Panc1 (cell line): ENCODE measurements at regions of chr19 and their contacts with region 1.

Region 1: DNA sequence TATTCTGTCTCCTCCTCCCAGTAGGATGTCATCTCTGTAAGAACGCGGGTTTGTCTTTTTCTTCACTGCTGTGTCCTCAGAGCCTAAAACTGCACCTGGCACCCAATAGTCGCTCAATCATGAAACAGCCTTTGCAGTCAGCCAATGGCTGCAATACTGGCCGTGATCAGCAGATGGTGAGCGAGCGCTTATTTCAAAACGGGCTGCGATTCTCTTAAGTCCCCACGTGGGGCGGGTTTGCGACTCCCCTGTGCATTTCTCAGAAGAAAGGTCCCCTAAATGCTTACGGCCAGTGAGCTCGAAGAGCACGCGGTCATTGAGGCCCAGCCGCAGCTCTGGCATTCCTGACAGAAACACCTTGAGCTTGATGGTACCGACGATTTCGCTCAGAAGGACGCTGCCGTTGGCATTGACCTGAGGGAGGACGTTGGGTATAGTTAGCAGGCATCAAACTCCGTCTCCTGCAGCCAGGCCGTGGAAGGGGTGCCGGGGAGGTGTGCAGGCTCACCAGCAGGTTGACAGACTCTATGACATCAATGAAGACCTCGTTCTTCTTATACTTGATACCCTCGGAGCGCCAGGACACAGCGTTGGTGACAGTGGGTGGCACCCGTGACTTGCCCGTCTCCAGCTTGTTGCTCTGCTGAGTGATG is 6.0 kb downstream of the AP1M2 start:
- DNase-seq: peak; percentile 76
- ATAC-seq: peak; percentile 91
- H3K4me3 ChIP-seq: peak overlapping the region in 1 of 2 experiments; percentile 37; a peak in 2 of 4 replicates
- H3K27ac ChIP-seq: no peak overlapping the region
- H3K4me1 ChIP-seq: no peaks in the 10 kb centered on the region
- H3K27me3 ChIP-seq: no peaks in the 10 kb centered on the region
- CTCF ChIP-seq: peak; percentile 94

Region 2: GRCh38 chr19:10431943-10432735 is 149.0 kb before region 1 on chr19:
- CTCF ChIA-PET with region 1: no interaction called
- POLR2A ChIA-PET with region 1: interaction called, 13 read pairs
- in situ Hi-C with region 1: no loop called
- intact Hi-C with region 1: no loop called
- DNase-seq: no peak
- ATAC-seq: peak; percentile 74
- H3K4me3 ChIP-seq: peak overlapping the region; percentile 49 to 65
- H3K27ac ChIP-seq: peak overlapping the region; percentile 75
- H3K4me1 ChIP-seq: peaks cover 17% of the 10 kb centered on the region
- H3K27me3 ChIP-seq: no peaks in the 10 kb centered on the region
- CTCF ChIP-seq: no peak

Region 3: GRCh38 chr19:10602330-10603083 is 21.4 kb after region 1 on chr19:
- CTCF ChIA-PET with region 1: interaction called, 3 read pairs
- POLR2A ChIA-PET with region 1: interaction called, 11 read pairs
- in situ Hi-C with region 1: no loop called
- intact Hi-C with region 1: no loop called
- DNase-seq: no peak
- ATAC-seq: peak; percentile 98
- H3K4me3 ChIP-seq: peak overlapping the region; percentile 63 to 71
- H3K27ac ChIP-seq: peak overlapping the region; percentile 68
- H3K4me1 ChIP-seq: peaks cover 16% of the 10 kb centered on the region
- H3K27me3 ChIP-seq: no peaks in the 10 kb centered on the region
- CTCF ChIP-seq: no peak

Region 4: GRCh38 chr19:10620786-10621185 is 39.7 kb after region 1 on chr19:
- CTCF ChIA-PET with region 1: interaction called, 11 read pairs
- POLR2A ChIA-PET with region 1: no interaction called
- in situ Hi-C with region 1: no loop called
- intact Hi-C with region 1: no loop called
- DNase-seq: no peak
- ATAC-seq: no peak
- H3K4me3 ChIP-seq: no peak overlapping the region
- H3K27ac ChIP-seq: no peak overlapping the region
- H3K4me1 ChIP-seq: peaks cover 6% of the 10 kb centered on the region
- H3K27me3 ChIP-seq: no peaks in the 10 kb centered on the region
- CTCF ChIP-seq: no peak

Region 5: GRCh38 chr19:10644260-10645007 is 63.3 kb after region 1 on chr19:
- CTCF ChIA-PET with region 1: interaction called, 49 read pairs
- POLR2A ChIA-PET with region 1: no interaction called
- in situ Hi-C with region 1: no loop called
- intact Hi-C with region 1: loop called (anchors 1 kb)
- DNase-seq: peak; percentile 27
- ATAC-seq: peak; percentile 97
- H3K4me3 ChIP-seq: no peak overlapping the region
- H3K27ac ChIP-seq: no peak overlapping the region
- H3K4me1 ChIP-seq: peaks cover 5% of the 10 kb centered on the region; the same call in 1 of the 2 replicates
- H3K27me3 ChIP-seq: no peaks in the 10 kb centered on the region
- CTCF ChIP-seq: peak; percentile 91

Region 6: DNA sequence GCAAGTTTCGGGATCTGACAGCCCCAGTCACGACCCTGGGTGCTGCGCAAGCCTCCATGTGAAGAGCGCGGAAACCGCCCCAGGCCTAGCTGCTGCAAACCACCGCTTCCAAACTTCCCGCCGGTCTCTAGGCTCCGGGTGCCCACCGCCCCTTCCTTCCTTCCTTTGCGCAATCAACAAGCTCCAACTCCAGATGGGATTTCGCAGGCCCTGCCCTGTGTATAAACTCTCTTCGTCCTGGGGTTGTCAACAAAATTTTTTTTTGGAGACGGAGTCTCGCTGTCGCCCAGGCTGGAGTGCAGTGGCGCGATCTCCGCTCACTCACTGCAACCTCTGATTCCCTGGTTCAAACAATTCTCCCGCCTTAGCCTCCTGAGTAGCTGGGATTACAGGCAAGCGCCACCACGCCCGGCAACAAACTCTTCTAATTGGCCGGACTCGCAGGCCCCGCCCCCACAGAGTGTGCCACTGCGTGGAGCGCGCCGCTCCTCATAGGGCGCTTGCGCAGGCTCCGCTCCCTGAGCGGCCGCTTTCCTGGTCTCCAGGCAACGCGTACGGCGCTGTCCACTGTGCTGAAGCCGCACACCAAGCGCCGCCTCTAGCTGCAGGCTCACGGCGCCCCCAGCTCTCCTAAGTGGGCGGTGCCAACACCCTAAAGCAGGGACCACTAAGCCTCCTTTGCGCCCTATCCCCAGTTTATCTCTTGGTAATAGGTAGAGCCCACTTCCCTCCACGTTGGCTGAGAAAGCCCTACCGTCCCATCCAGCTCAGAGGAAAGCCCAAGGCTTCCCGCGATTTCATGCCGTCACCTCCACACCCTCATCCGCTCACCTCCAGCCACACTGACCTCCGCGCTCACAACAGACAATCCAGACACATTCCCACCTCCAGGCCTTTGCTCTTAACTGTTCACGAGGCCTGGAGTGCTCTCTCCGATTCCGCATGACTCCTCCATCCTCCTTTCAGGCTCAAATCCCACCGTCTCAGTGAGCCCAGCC is 114.6 kb after region 1 on chr19:
- CTCF ChIA-PET with region 1: interaction called, 12 read pairs
- POLR2A ChIA-PET with region 1: no interaction called
- in situ Hi-C with region 1: no loop called
- intact Hi-C with region 1: no loop called
- DNase-seq: no peak
- ATAC-seq: peak; percentile 95
- H3K4me3 ChIP-seq: peak overlapping the region; percentile 21 to 40
- H3K27ac ChIP-seq: no peak overlapping the region
- H3K4me1 ChIP-seq: peaks cover 4% of the 10 kb centered on the region
- H3K27me3 ChIP-seq: no peaks in the 10 kb centered on the region
- CTCF ChIP-seq: no peak

Region 7: GRCh38 chr19:11738746-11739620 is 1157.9 kb after region 1 on chr19 and contains the start of gene ZNF823:
- CTCF ChIA-PET with region 1: no interaction called
- POLR2A ChIA-PET with region 1: no interaction called
- in situ Hi-C with region 1: no loop called
- intact Hi-C with region 1: no loop called
- DNase-seq: peak; percentile 84
- ATAC-seq: peak; percentile 99
- H3K4me3 ChIP-seq: peak within 1 kb of the TSS; percentile 83 to 84
- H3K27ac ChIP-seq: peak within 1 kb of the TSS; percentile 95
- H3K4me1 ChIP-seq: peaks cover 7% of the 10 kb centered on the region
- H3K27me3 ChIP-seq: no peaks in the 10 kb centered on the region
- CTCF ChIP-seq: no peak
- total RNA-seq, gene ZNF823: 5.0 TPM